Mammary epithelial cell (primary cell): ENCODE measurements at regions of chr6 and their contacts with region 1.

Region 1: GRCh38 chr6:128520436-128521281 is at the start of gene PTPRK:
- DNase-seq: peak; percentile 91
- H3K4me3 ChIP-seq: peak within 1 kb of the TSS; percentile 91 to 100 (median 98)
- H3K27ac ChIP-seq: peak within 1 kb of the TSS; percentile 96
- H3K4me1 ChIP-seq: peaks cover 28% of the 10 kb centered on the region
- H3K27me3 ChIP-seq: no peaks in the 10 kb centered on the region
- CTCF ChIP-seq: peak; percentile 17 to 43
- total RNA-seq, gene PTPRK: 103 to 336 TPM

Region 2: DNA sequence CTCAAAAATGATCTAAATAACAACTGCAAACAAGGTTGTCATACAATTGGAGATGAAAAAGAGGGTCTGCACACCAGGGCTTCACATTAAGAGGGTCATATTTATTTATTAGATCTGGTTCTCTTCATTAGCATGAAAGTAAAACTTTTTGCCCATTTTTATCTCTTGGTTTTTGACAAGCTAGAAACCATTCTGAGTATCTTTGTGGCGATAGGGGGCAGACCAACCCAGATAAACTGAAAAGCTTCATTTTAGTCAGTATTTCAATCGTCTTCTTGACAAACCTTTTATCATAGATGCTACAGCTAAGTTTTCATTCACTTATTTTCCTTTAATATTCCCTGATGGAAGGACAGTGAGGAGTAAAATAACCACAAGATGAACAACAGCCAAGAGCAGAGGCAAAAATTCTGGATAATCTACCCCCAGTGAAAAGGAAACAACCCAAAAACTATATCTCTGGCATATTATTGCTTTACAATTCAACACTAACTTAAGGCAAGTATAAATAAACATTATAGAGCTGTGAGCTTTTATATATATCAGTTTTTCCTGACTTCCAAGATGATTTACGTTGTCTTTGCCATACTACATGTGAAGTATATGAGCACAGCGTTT is 665.0 kb before region 1 on chr6:
- CTCF ChIA-PET with region 1: interaction called, 5 read pairs
- dilution Hi-C with region 1: no loop called
- in situ Hi-C with region 1: no loop called
- intact Hi-C with region 1: loop called (anchors 1 kb)
- DNase-seq: no peak
- H3K4me3 ChIP-seq: no peak overlapping the region
- H3K27ac ChIP-seq: no peak overlapping the region
- H3K4me1 ChIP-seq: no peaks in the 10 kb centered on the region
- H3K27me3 ChIP-seq: no peaks in the 10 kb centered on the region
- CTCF ChIP-seq: peak; percentile 3 to 44

Region 3: GRCh38 chr6:128209771-128210170 is 310.9 kb before region 1 on chr6:
- CTCF ChIA-PET with region 1: no interaction called
- dilution Hi-C with region 1: no loop called
- in situ Hi-C with region 1: no loop called
- intact Hi-C with region 1: loop called (anchors 10 kb)
- DNase-seq: no peak
- H3K4me3 ChIP-seq: no peak overlapping the region
- H3K27ac ChIP-seq: no peak overlapping the region
- H3K4me1 ChIP-seq: peaks cover 27% of the 10 kb centered on the region
- H3K27me3 ChIP-seq: no peaks in the 10 kb centered on the region
- CTCF ChIP-seq: no peak

Region 4: DNA sequence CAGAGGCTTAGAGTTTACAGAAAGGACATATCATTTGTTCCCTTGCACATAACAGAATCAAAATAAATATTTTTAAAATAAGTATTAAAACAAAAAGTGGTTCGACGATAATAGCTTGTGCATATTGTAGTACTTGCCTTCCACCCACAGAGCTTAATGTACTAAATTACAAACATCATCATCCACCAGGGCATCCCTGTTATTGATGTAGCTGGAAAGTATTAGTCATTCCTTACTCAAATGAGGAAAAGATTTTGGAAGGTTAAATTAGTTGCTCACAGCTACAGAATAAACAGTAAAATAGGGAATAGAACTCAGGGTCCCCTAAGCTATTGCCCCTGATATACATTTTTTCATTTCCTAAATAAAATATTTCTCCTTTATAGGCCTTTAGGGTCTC is 150.6 kb before region 1 on chr6:
- CTCF ChIA-PET with region 1: no interaction called
- dilution Hi-C with region 1: no loop called
- in situ Hi-C with region 1: no loop called
- intact Hi-C with region 1: loop called (anchors 10 kb)
- DNase-seq: peak; percentile 48
- H3K4me3 ChIP-seq: no peak overlapping the region
- H3K27ac ChIP-seq: no peak overlapping the region
- H3K4me1 ChIP-seq: no peaks in the 10 kb centered on the region
- H3K27me3 ChIP-seq: no peaks in the 10 kb centered on the region
- CTCF ChIP-seq: peak in 1 of 2 donors; percentile 6

Region 5: GRCh38 chr6:128554302-128554701 is 33.6 kb after region 1 on chr6:
- CTCF ChIA-PET with region 1: no interaction called
- dilution Hi-C with region 1: no loop called
- in situ Hi-C with region 1: no loop called
- intact Hi-C with region 1: no loop called
- DNase-seq: no peak
- H3K4me3 ChIP-seq: no peak overlapping the region
- H3K27ac ChIP-seq: no peak overlapping the region
- H3K4me1 ChIP-seq: no peaks in the 10 kb centered on the region
- H3K27me3 ChIP-seq: no peaks in the 10 kb centered on the region
- CTCF ChIP-seq: peak; percentile 14 to 51

Region 6: GRCh38 chr6:128569737-128570679 is 49.3 kb after region 1 on chr6:
- CTCF ChIA-PET with region 1: no interaction called
- dilution Hi-C with region 1: no loop called
- in situ Hi-C with region 1: no loop called
- intact Hi-C with region 1: loop called (anchors 2 kb)
- DNase-seq: peak; percentile 81
- H3K4me3 ChIP-seq: no peak overlapping the region
- H3K27ac ChIP-seq: peak overlapping the region; percentile 61
- H3K4me1 ChIP-seq: peaks cover 38% of the 10 kb centered on the region
- H3K27me3 ChIP-seq: no peaks in the 10 kb centered on the region
- CTCF ChIP-seq: no peak

Region 7: DNA sequence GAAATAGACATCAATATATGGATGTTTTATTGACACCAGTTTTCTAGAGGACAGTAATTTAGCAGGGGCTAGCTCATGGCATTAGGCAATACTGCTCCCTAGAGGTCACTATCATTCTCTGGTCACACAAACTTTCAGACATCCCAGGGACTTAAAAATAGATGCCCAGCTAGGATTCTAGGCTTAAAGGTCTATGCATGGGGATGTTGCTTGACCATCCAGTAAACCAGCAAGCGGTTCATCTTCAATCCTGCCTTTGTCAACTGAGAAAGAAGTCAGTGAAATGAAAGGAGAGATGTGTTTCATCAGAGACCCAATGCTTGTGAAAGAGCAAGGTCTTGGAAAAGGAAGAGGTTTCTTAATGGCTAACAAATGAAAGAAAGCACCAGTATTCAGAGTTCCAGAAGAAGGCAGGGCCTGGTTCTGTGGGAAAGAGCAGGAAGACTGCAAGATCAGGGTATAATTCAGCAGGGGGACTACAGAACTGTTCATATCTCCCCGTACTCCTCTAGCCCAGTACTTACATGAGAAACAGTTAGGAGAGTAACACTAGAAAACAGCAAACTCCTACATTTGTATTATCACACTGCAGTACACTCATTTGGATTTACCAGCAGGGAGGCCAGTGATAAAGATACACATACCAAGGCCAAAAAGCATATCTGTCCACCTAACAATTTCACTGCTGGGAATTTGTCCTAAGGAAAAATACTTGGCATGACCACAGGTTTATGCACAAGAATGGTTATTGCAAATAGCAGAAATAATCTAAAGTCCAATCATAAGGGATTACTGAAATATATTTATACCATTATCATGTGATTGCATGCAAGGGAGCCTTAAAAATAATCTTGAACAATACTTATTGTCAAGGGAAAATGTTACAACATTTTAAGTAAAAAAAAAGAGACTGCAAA is 210.8 kb after region 1 on chr6:
- CTCF ChIA-PET with region 1: interaction called, 5 read pairs
- dilution Hi-C with region 1: no loop called
- in situ Hi-C with region 1: no loop called
- intact Hi-C with region 1: loop called (anchors 1 kb)
- DNase-seq: peak; percentile 47
- H3K4me3 ChIP-seq: no peak overlapping the region
- H3K27ac ChIP-seq: no peak overlapping the region
- H3K4me1 ChIP-seq: no peaks in the 10 kb centered on the region
- H3K27me3 ChIP-seq: no peaks in the 10 kb centered on the region
- CTCF ChIP-seq: peak; percentile 66 to 78

Region 8: GRCh38 chr6:129370268-129370916 is 849.7 kb after region 1 on chr6:
- CTCF ChIA-PET with region 1: no interaction called
- dilution Hi-C with region 1: no loop called
- in situ Hi-C with region 1: no loop called
- intact Hi-C with region 1: loop called (anchors 10 kb)
- DNase-seq: peak; percentile 24
- H3K4me3 ChIP-seq: no peak overlapping the region
- H3K27ac ChIP-seq: no peak overlapping the region
- H3K4me1 ChIP-seq: no peaks in the 10 kb centered on the region
- H3K27me3 ChIP-seq: no peaks in the 10 kb centered on the region
- CTCF ChIP-seq: peak; percentile 66 to 78